Pancreas (tissue), 10 donors: ENCODE measurements at regions of chr5 and their contacts with region 1.

Region 1: DNA sequence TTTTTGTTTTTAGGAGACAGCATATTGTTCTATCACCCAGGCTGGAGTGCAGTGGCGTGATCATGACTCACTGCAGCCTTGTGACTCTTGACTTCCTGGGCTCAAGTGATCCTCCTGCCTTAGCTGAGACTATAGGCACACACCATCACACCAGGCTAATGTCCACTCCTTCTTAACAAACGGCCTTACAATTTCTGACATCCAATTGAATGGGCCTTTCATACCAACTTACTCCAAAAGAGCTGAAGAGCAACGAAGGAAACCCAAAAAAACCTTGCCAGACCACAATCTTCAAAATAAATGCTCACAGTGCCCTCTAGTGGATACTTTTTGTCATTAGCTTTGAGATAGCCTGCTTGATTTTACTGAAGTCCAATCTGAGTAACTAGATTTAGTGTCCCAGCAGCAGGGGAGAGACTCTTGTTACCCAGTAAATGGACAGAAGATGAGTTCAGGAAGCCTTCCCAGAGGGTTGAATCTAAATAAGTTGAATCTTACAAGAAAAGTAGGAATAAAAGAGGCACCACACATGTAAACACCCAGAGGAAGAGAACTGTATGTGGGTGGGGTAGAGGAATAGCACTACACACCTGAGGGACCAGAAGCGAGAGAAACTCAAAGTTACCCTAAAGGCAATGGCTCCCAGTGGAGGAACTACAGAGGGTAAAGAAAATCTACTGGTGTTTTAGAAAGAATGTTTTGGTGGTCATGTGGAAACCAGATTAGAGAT is 9.3 kb downstream of the ZNF622 start:
- DNase-seq: peak in 2 of 6 donors; percentile 23 to 47
- ATAC-seq: peak; percentile 78 to 86 (median 80)
- H3K4me3 ChIP-seq: peak overlapping the region in 1 of 4 donors; percentile 1
- H3K27ac ChIP-seq: peak overlapping the region in 2 of 4 donors; percentile 27 to 33
- H3K4me1 ChIP-seq: peaks cover 21 to 44% (median 29%) of the 10 kb centered on the region in 3 donors
- H3K27me3 ChIP-seq: no peaks in the 10 kb centered on the region
- CTCF ChIP-seq: peak; percentile 49 to 75 (median 64)

Region 2: GRCh38 chr5:16169550-16169949 is 286.7 kb before region 1 on chr5:
- intact Hi-C with region 1: loop called in 1 of 3 experiments (anchors 5 kb)
- DNase-seq: no peak
- ATAC-seq: no peak
- H3K4me3 ChIP-seq: no peak overlapping the region
- H3K27ac ChIP-seq: no peak overlapping the region
- H3K4me1 ChIP-seq: no peaks in the 10 kb centered on the region
- H3K27me3 ChIP-seq: no peaks in the 10 kb centered on the region
- CTCF ChIP-seq: no peak

Region 3: GRCh38 chr5:16304846-16305245 is 151.4 kb before region 1 on chr5:
- intact Hi-C with region 1: no loop called
- DNase-seq: no peak
- ATAC-seq: no peak
- H3K4me3 ChIP-seq: no peak overlapping the region
- H3K27ac ChIP-seq: no peak overlapping the region
- H3K4me1 ChIP-seq: no peaks in the 10 kb centered on the region
- H3K27me3 ChIP-seq: no peaks in the 10 kb centered on the region
- CTCF ChIP-seq: no peak

Region 4: DNA sequence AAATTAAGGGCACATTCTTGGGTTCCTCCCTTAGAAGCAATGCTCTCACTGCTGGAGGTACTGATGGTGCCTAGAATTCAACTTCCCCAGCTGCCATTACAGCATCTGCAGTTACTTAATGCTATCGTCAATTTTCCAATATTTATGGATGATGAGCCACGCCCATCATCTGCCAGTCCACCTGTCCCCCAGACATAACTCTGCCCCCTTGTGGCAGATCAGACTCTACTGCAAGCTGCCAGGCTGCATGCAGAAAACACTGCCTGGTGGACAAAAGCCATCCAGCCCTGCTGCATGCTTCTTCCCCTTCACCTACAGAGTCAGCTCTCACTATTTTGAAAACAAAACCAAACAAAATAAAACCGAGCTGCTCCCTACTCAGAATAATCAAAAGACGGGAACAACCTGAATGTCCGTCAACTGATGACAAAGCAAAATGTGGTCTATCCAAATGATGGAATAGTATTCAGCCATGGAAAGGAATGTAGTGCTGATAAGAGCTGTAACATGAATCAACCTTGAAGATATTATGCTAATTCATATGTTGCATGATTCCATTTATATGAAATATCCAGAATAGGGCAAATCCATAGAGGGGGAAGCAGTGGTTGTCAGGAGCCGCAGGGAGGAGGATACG is 94.2 kb after region 1 on chr5:
- intact Hi-C with region 1: no loop called
- DNase-seq: peak in 4 of 6 donors; percentile 55 to 66 (median 56)
- ATAC-seq: peak; percentile 47 to 71 (median 64)
- H3K4me3 ChIP-seq: peak overlapping the region in 1 of 4 donors; percentile 21
- H3K27ac ChIP-seq: no peak overlapping the region
- H3K4me1 ChIP-seq: peaks cover 17 to 27% (median 27%) of the 10 kb centered on the region in 3 donors
- H3K27me3 ChIP-seq: no peaks in the 10 kb centered on the region
- CTCF ChIP-seq: peak; percentile 48 to 80 (median 67)